ENCODE measurements at regions of chr3 and their contacts with region 1.

Region 1: GRCh38 chr3:142723968-142724681 is at the start of gene TRPC1:
- DNase-seq: peak; percentile 76
- ATAC-seq: peak; percentile 89
- H3K4me3 ChIP-seq: peak within 1 kb of the TSS; percentile 82 to 97 (median 96)
- H3K27ac ChIP-seq: peak within 1 kb of the TSS; percentile 92
- H3K4me1 ChIP-seq: peaks cover 18% of the 10 kb centered on the region
- H3K27me3 ChIP-seq: no peaks in the 10 kb centered on the region; a peak in 1 of 5 replicates
- CTCF ChIP-seq: no peak; the same call in 1 of the 2 replicates
- EP300 ChIP-seq: no peak
- POLR2A ChIP-seq: peak; percentile 93 to 99
- RAD21 ChIP-seq: no peak; the same call in 1 of the 2 replicates
- total RNA-seq, gene TRPC1: 7.6 and 10.8 TPM in 2 replicates

Region 2: DNA sequence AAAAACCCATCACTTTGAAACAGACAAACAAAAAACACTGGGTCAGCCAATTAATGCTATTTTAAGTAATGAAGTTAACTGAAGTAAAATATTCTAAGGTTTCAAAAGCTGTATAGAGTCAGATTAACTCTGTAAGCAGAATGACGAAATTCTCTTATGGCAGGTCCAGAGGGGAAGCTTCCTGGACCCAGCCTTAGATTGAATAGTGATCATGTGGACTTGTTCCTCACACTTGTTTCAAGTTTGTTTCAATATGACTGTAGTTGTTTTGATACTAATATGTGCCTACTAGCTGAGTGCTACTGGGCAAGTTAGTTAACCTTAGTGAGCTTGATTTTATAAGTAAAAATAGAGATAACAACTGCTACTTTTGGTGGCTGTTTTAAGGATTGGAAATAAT is 95.3 kb before region 1 on chr3:
- CTCF ChIA-PET with region 1: no interaction called
- POLR2A ChIA-PET with region 1: no interaction called
- in situ Hi-C with region 1: no loop called
- intact Hi-C with region 1: no loop called
- DNase-seq: no peak
- ATAC-seq: no peak
- H3K4me3 ChIP-seq: no peak overlapping the region
- H3K27ac ChIP-seq: no peak overlapping the region
- H3K4me1 ChIP-seq: peaks cover 9% of the 10 kb centered on the region
- H3K27me3 ChIP-seq: no peaks in the 10 kb centered on the region
- CTCF ChIP-seq: no peak
- EP300 ChIP-seq: no peak
- POLR2A ChIP-seq: no peak
- RAD21 ChIP-seq: no peak

Region 3: DNA sequence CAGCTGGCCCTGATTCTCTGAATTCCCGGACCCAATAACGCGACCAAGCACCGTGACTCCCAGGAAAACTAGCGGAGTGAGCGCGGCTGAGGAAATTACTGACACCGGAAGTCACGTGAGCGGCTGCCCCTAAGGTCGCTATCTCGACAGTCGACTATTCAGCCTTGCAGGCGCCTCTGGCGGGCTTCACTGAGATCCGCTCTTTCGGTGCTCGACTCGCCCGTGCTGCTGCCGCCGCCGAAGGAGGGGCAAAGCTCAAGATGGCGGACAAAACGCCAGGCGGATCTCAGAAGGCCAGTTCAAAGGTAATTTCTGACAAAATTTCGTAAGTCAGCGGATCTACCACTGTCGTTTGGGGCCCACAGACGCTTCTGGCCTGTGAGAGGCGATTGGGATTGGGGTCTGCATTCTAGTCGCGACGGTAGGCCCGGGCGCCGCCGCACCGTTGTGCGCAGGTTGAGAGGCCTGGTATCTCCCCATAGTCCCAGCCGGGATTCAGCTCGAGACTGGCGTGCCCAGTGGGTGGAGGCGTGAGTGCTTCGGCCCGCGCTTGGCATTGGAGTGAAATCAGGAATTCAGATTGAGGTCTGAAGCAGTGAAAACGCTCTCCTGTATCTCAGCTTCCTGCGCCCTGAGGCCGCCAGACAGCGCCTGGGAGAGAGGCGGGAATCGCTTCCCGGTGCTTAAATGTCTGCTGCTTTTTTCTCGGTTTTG is 277.4 kb after region 1 on chr3 and contains the start of gene U2SURP:
- CTCF ChIA-PET with region 1: no interaction called
- POLR2A ChIA-PET with region 1: interaction called, 8 read pairs
- in situ Hi-C with region 1: no loop called
- intact Hi-C with region 1: loop called (anchors 5 kb)
- DNase-seq: peak; percentile 96
- ATAC-seq: peak; percentile 85
- H3K4me3 ChIP-seq: peak within 1 kb of the TSS; percentile 87 to 92 (median 90)
- H3K27ac ChIP-seq: peak within 1 kb of the TSS; percentile 89
- H3K4me1 ChIP-seq: peaks cover 60% of the 10 kb centered on the region
- H3K27me3 ChIP-seq: no peaks in the 10 kb centered on the region; a peak in 1 of 5 replicates
- CTCF ChIP-seq: no peak
- EP300 ChIP-seq: peak; percentile 64 to 80; a peak in 3 of 4 replicates
- POLR2A ChIP-seq: peak; percentile 95
- RAD21 ChIP-seq: 0 out of 2 replicates have a peak, but pooled peaks have one; percentile 40
- total RNA-seq, gene U2SURP: 173 and 250 TPM in 2 replicates